Posterior cingulate gyrus (tissue), 11 donors: ENCODE measurements at regions of chr22 and their contacts with region 1.

Region 1: DNA sequence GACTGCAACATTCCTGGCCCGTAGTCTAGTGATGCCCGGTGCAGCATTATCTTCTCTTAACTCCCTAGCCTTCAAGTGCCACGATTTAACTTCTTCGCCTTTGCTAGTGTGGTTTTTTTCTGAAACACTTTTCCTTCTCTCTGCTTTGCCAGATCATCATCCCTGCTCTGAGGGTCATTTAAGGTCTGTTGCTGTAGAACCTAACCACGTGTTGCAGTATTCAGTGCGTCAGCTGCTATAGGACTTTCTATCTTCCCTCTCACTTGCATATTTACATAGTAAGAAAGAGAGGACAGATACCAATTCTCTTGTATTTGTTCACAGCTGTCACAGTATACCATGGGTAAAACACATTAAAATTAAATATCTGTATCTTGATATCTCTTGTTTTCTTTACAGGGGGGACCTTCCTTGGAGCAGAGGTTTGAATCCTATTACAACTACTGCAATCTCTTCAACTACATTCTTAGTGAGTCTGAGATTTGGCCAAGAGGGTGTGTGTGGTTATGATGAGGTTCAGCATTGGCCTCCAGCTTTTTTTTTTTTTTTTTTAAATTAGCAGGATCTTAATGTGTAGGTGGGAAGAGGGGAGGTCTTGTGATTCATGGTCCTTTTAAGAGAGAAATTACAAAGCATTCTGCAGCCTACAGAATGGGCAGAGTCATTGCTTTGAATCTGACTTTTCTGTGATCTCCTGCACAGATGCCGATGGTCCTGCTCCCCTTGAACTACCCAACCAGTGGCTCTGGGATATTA is 13.5 kb downstream of the EIF3L start:
- DNase-seq: no peak

Region 2: GRCh38 chr22:37401401-37402183 is 461.2 kb before region 1 on chr22:
- intact Hi-C with region 1: no loop called
- DNase-seq: no peak

Region 3: DNA sequence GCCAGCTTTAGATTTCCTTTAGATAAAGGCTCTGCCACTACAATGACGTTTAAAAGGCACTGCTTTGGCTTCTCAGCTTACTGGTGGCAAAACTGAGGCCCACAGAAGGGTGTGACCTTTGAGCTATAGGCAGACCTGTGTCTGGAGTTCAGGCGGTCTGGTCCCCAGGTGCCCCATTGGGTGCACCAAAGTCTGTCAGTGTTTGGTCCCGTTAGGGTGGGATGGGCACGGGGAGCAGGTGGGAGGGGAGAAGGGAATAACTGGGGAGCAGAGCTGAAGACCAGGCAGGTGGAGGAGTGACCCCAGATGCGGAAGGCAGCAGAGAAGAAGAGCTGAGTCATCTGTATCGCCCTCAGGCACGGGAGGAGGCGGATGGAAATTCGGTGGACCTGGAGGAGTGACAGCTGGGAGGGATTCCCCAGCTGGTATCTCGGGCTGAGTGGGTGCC is 100.3 kb before region 1 on chr22:
- intact Hi-C with region 1: no loop called
- DNase-seq: no peak

Region 4: DNA sequence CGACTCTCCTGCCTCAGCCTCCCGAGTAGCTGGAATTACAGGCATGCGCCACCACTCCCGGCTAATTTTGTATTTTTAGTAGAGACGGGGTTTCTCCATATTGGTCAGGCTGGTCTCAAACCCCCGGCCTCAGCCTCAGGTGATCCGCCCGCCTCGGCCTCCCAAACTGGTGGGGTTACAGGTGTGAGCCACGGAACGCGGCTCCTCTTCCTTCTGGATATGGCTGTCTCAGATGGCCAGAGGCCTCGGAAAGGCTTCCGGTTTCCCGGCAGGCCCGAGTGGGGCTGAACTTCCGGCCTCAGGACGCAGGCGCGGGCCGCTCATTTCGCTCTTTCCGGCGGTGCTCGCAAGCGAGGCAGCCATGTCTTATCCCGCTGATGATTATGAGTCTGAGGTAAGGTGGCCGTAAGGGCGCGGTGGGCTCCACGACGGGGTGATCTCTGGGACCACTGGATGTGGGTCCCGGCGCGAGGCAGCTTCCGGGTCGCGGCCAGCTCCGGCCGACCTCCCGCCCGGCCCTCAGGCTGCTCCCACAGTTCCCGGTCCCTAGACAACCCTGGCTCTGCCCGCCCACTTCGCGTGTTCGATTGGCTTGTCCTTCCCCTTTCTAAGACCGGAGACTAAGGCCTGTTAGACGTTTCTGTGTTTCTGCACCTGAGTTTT is 13.5 kb before region 1 on chr22 and contains the start of gene EIF3L:
- intact Hi-C with region 1: loop called (anchors 1 kb)
- DNase-seq: peak; percentile 89 to 99 (median 93)